ENCODE measurements at regions of chr14 and their contacts with region 1.

Region 1: GRCh38 chr14:105065280-105066228 is at the start of gene GPR132:
- DNase-seq: peak; percentile 88
- H3K4me3 Mint-ChIP-seq: peak within 1 kb of the TSS; percentile 87
- H3K27ac Mint-ChIP-seq: peak within 1 kb of the TSS; percentile 88
- H3K4me1 Mint-ChIP-seq: peaks cover 50% of the 10 kb centered on the region
- H3K27me3 Mint-ChIP-seq: no peaks in the 10 kb centered on the region
- total RNA-seq, gene GPR132: 27.1 and 29.8 TPM in 2 replicates

Region 2: GRCh38 chr14:105045710-105046326 is 19.7 kb before region 1 on chr14:
- intact Hi-C with region 1: loop called (anchors 2 kb)
- DNase-seq: peak; percentile 86
- H3K4me3 Mint-ChIP-seq: no peak overlapping the region
- H3K27ac Mint-ChIP-seq: no peak overlapping the region
- H3K4me1 Mint-ChIP-seq: peaks cover 11% of the 10 kb centered on the region
- H3K27me3 Mint-ChIP-seq: no peaks in the 10 kb centered on the region

Region 3: DNA sequence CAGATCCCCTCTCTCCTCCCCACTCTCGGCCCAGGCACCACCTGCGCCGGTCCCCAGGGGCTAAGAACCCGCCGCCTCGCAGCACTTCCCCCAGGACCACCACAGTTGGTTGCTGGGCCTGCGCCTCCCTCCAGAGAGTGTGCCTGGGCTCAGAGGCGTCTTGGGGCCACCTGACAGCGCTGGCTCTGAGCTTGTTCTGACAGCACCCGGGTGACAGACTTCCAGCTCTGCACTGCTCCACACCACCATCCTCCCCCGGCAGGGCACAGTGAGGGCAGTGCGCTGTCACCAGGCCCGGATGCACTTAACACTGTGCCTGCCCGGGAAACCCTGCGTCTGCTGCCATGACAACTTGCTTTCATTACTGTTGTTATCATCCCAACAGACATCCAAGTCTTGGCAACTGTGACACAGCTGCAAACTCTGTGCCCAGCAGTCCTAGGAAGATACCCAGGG is 228.6 kb after region 1 on chr14:
- intact Hi-C with region 1: loop called (anchors 10 kb)
- DNase-seq: peak; percentile 73
- H3K4me3 Mint-ChIP-seq: peak overlapping the region; percentile 45
- H3K27ac Mint-ChIP-seq: peak overlapping the region; percentile 96
- H3K4me1 Mint-ChIP-seq: peaks cover 35% of the 10 kb centered on the region
- H3K27me3 Mint-ChIP-seq: no peaks in the 10 kb centered on the region